ENCODE measurements at regions of chr6 and their contacts with region 1.

Region 1: GRCh38 chr6:47631269-47631772 is 67.1 kb upstream of the ADGRF4 start:
- DNase-seq: peak; percentile 44
- H3K27ac ChIP-seq: no peak overlapping the region
- CTCF ChIP-seq: peak; percentile 69

Region 2: DNA sequence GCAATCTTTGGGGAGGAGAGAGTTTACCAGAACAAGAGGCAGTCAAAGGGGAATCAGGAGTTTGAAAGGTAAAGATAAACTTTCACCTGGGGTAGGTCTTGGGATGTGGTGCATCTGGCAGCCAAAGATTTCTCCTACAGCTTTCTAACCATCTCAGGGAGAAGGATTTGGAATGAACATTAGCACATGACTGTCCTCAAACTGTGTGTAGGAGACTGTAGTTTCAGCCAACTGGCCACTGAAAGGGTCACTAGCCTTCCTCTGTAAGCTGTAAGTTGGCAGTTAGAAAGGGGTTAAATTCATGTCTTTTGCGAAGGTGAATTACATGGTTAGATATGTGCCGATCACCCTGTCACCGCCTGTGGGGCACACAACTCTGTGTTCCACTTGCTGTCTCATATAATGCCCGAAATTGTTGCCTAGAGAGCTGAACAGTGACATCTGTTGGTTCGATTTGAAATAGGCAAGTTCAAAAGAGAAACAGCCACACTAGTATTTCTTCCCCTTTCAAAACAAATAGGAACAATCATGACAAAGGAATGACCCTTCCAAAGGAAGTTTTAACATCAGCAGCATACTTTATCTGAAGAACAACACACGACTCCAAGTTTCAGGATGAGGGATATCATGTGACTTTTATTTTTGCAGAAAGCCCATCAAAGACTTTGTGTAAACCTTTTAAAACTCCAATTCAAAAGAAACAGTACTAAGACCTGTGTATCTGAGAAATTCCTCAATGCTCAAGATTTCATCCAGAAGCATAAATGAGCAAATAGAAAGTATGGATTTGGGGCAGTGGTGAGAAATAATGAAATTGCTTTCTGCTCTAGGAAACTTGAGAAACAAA is 149.4 kb after region 1 on chr6:
- CTCF ChIA-PET with region 1: interaction called, 22 read pairs
- POLR2A ChIA-PET with region 1: no interaction called
- DNase-seq: peak; percentile 53
- H3K27ac ChIP-seq: no peak overlapping the region
- CTCF ChIP-seq: peak; percentile 76

Measured in RWPE1 (cell line).